Activated T-helper 2 cell treated with anti-CD3 and anti-CD28 coated beads, Interferon-gamma antibody, Interleukin-2, Interleukin-4, amounts not matched to agents 10 μg/mL and 5 μg/mL and 100 μg/mL, durations not matched to agents 14 hours and 24 hours and 36 hours (primary cell): ENCODE measurements at regions of chr7 and their contacts with region 1.

Region 1: GRCh38 chr7:143914938-143915652 is 13.1 kb upstream of the TCAF1 start:
- DNase-seq: no peak
- H3K4me3 Mint-ChIP-seq: no peak overlapping the region
- H3K27ac Mint-ChIP-seq: no peak overlapping the region
- H3K4me1 Mint-ChIP-seq: peaks cover 5% of the 10 kb centered on the region
- H3K27me3 Mint-ChIP-seq: peaks cover 28% of the 10 kb centered on the region

Region 2: DNA sequence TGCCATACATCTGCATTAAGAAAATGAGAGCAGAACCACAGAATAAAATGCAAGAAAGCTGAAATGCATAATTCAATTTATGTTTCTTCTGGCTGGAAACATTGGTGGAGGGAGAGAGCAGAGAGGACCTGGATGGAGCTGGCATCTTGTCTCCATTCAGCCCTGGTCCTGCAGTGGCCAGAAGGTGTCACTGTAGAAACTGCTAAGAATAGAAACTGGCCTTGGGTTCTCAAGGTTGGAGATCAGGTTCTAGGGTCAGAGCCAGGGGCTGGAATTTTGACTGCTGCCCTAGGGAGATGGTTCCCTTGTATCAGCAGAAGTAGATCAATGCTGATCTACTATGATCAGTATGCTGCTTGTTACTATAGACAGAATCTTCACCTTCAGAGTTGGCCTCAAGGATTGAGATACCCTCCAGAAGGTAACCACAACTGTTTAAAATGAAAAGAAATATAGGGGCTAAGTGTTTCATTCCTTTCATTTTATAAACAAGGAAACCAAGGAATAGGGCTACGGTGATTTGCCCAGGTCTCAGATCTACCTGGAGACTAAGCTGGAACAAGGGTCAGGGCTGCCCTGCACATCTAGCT is 424.3 kb before region 1 on chr7:
- intact Hi-C with region 1: loop called (anchors 5 kb)
- DNase-seq: no peak
- H3K4me3 Mint-ChIP-seq: no peak overlapping the region
- H3K27ac Mint-ChIP-seq: no peak overlapping the region
- H3K4me1 Mint-ChIP-seq: peaks cover 28% of the 10 kb centered on the region
- H3K27me3 Mint-ChIP-seq: no peaks in the 10 kb centered on the region

Region 3: DNA sequence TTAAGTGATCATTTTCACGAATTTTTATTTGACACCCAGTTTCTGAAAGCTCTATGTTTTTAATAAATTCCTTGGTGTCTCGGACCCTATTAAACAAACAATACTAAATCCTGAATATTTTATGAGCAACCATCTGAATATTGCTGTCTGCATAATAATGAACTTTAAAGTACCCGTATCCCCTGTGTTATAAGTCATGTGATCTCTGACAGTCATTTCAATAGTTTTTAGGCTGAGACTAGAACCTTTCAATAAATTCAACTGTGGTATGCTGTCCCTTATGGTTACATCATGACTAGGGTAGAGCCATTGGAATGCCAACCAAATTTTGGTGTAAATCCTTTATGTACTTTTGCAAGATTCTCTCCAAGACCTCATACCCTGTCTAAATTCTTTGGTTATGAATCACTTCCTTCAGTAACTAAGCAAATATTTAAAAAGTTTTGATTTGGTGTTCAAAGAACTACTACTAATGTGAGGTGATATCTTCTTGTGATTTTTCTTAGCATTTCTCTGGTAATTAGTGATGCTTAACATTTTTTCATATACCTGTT is 64.2 kb after region 1 on chr7:
- intact Hi-C with region 1: no loop called
- DNase-seq: no peak
- H3K4me3 Mint-ChIP-seq: no peak overlapping the region
- H3K27ac Mint-ChIP-seq: no peak overlapping the region
- H3K4me1 Mint-ChIP-seq: no peaks in the 10 kb centered on the region
- H3K27me3 Mint-ChIP-seq: peaks cover 7% of the 10 kb centered on the region

Region 4: GRCh38 chr7:144656965-144657517 is 741.9 kb after region 1 on chr7:
- intact Hi-C with region 1: no loop called
- DNase-seq: no peak
- H3K4me3 Mint-ChIP-seq: no peak overlapping the region
- H3K27ac Mint-ChIP-seq: no peak overlapping the region
- H3K4me1 Mint-ChIP-seq: peaks cover 1% of the 10 kb centered on the region
- H3K27me3 Mint-ChIP-seq: no peaks in the 10 kb centered on the region

Region 5: GRCh38 chr7:145050415-145050814 is 1135.3 kb after region 1 on chr7:
- intact Hi-C with region 1: no loop called
- DNase-seq: no peak
- H3K4me3 Mint-ChIP-seq: no peak overlapping the region
- H3K27ac Mint-ChIP-seq: no peak overlapping the region
- H3K4me1 Mint-ChIP-seq: no peaks in the 10 kb centered on the region
- H3K27me3 Mint-ChIP-seq: no peaks in the 10 kb centered on the region